ENCODE measurements at regions of chr3 and their contacts with region 1.

Region 1: GRCh38 chr3:185215873-185216606 is 37.8 kb downstream of the EHHADH start:
- DNase-seq: peak; percentile 33
- H3K4me3 Mint-ChIP-seq: no peak overlapping the region
- H3K27ac Mint-ChIP-seq: peak overlapping the region; percentile 31
- H3K4me1 Mint-ChIP-seq: no peaks in the 10 kb centered on the region
- H3K27me3 Mint-ChIP-seq: no peaks in the 10 kb centered on the region
- CTCF ChIP-seq: peak; percentile 50

Region 2: DNA sequence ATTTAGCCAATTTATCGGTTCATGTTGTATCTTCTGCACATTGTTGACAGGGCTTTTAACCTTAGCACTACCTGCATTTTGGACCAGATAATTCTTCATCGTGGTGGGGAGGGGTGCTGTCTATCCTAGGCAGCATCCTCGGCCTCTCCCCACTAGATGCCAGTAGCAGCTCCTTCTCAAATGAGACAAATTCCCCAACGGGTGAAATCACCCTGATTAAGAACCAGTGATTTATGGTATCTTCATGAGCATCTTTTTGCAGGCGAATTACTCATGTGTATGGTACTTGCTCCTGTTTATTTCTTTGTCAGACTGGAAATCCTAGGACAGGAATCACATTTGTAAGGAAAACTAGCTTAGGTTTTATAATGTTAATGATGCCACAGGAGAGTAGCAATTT is 131.1 kb before region 1 on chr3:
- CTCF ChIA-PET with region 1: no interaction called
- POLR2A ChIA-PET with region 1: no interaction called
- intact Hi-C with region 1: loop called (anchors 10 kb)
- DNase-seq: no peak
- H3K4me3 Mint-ChIP-seq: no peak overlapping the region
- H3K27ac Mint-ChIP-seq: no peak overlapping the region
- H3K4me1 Mint-ChIP-seq: no peaks in the 10 kb centered on the region
- H3K27me3 Mint-ChIP-seq: peaks cover 23% of the 10 kb centered on the region
- CTCF ChIP-seq: no peak

Region 3: DNA sequence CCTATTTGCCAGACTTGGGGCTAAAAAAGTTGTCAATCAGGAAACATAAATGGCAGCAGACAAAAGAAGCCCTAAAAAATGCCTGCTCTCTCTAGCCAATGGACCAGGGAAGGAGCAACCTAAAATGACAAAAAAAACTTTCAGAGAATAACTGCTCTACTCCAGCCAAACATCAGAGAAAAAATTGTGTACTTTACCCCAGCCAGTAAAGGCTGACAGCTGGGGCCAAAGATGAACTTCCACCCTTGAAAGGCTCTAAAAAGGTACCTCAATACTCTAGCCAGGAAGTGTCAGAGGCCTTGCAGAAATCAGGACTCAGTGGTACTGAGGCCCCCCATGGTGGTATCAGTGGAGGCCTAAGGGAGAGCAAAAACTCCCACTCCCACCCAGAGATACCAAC is 81.5 kb before region 1 on chr3:
- CTCF ChIA-PET with region 1: no interaction called
- POLR2A ChIA-PET with region 1: no interaction called
- intact Hi-C with region 1: no loop called
- DNase-seq: no peak
- H3K4me3 Mint-ChIP-seq: no peak overlapping the region
- H3K27ac Mint-ChIP-seq: no peak overlapping the region
- H3K4me1 Mint-ChIP-seq: no peaks in the 10 kb centered on the region
- H3K27me3 Mint-ChIP-seq: peaks cover 69% of the 10 kb centered on the region
- CTCF ChIP-seq: no peak

Region 4: DNA sequence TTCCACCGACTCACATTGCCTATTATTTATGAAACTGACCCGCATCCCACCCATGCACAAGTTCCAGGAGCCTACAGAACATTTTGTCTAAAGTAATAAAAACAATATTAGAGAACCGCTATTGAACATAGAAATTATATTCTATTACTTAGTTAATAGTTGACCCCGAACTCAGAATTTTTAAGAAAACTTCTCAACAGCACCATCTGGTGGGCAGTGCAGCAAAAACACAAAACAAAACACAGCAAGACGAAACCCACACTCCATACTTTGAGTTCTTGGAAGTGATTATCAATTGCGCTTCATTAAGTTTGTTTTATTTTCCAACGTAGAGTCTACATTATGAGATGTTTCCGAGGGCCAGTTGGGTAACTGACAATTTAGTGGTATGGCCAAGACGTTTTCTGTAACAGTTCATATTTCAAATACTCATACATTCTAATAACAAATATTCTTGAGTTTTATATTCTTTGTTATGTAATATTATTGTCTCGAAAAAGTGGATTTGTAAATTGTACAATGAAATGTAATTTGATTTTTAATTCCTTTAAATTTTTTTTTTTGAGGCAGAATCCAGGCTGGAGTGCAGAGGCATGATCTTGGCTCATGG is 39.2 kb before region 1 on chr3:
- CTCF ChIA-PET with region 1: interaction called, 9 read pairs
- POLR2A ChIA-PET with region 1: no interaction called
- intact Hi-C with region 1: loop called (anchors 1 kb)
- DNase-seq: peak; percentile 48
- H3K4me3 Mint-ChIP-seq: no peak overlapping the region
- H3K27ac Mint-ChIP-seq: no peak overlapping the region
- H3K4me1 Mint-ChIP-seq: no peaks in the 10 kb centered on the region
- H3K27me3 Mint-ChIP-seq: no peaks in the 10 kb centered on the region
- CTCF ChIP-seq: peak; percentile 72

Region 5: DNA sequence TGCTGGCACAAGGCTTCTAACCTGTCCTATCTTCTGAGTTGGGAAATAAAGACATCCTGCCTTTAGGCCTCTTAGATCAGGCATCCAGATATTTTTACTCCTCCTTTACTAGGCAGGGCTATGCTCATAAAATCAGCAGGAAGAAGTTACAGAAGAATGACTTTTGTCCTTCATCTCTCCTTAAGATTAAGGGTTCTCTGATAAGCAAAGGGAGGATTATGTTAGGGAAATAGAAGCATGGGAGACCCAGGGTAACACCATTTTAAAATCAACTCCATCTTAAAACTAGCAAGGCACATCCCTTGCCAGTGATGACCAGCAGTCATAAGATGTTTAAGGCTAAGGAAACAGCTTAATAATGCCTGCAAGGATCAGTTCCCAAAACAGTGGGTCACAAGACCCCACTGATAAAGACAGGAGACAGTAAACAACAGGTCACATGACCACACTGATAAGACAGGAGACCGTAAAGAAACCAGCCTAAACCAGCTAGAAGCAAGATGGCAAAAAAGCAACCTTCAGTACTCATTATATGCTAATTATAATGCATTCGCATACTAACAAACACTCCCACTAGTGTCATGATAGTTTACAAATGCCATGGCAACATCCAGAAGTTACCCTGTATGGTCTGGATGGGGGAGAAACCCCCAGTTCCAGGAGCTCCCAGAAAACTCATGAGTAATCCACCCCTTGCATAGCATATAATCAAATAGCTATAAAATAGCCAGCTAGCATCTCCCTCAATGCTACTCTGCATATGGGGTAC is 52.3 kb after region 1 on chr3:
- CTCF ChIA-PET with region 1: no interaction called
- POLR2A ChIA-PET with region 1: no interaction called
- intact Hi-C with region 1: no loop called
- DNase-seq: no peak
- H3K4me3 Mint-ChIP-seq: no peak overlapping the region
- H3K27ac Mint-ChIP-seq: no peak overlapping the region
- H3K4me1 Mint-ChIP-seq: no peaks in the 10 kb centered on the region
- H3K27me3 Mint-ChIP-seq: peaks cover 24% of the 10 kb centered on the region
- CTCF ChIP-seq: no peak

Measured in MCF 10A (cell line).